SK-N-SH (cell line): ENCODE measurements at regions of chr6 and their contacts with region 1.

Region 1: DNA sequence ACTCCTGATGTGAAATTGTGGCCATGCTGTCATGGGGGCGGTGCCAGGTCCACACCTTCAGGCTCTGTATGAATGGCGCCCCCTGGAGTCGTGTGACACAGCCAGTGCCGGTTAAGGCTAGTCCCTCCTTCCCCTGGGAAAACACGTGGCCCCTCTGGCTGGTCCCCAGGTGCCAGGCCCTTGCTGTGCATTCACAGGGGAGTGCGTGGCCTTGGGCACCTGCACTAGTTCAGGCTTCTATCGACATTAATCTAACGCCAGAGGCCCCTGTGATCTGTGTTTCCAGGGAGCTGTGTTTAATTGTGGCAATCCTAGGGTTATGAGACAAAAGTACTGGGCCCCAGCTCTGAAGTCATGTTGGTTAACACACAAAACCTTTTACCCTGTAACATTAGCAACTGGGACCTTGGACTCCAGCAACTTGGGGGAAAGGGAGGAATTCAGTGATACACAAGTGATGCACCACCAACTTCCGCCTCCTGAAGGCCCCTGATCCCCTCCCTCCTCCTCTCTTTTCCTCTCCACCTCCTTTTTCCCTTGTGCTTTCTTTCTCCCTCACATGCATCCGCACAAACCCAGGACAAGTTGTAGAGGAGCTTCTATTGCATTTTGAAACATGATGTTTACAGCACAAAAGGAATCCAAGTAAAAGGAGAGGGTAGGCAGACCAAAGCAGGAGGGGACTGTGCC is 74.0 kb downstream of the SSR1 start:
- DNase-seq: peak; percentile 79
- H3K4me3 ChIP-seq: no peak overlapping the region; a peak in 1 of 4 replicates
- H3K27ac ChIP-seq: no peak overlapping the region
- H3K4me1 ChIP-seq: peaks cover 0 to 13% of the 10 kb centered on the region in 2 experiments; a peak in 2 of 4 replicates
- H3K27me3 ChIP-seq: no peaks in the 10 kb centered on the region
- CTCF ChIP-seq: peak; percentile 73
- EP300 ChIP-seq: no peak
- RAD21 ChIP-seq: peak; percentile 72

Region 2: GRCh38 chr6:6717953-6718352 is 521.1 kb before region 1 on chr6:
- CTCF ChIA-PET with region 1: interaction called, 16 read pairs
- POLR2A ChIA-PET with region 1: no interaction called
- DNase-seq: no peak
- H3K4me3 ChIP-seq: no peak overlapping the region
- H3K27ac ChIP-seq: no peak overlapping the region
- H3K4me1 ChIP-seq: no peaks in the 10 kb centered on the region; a peak in 1 of 4 replicates
- H3K27me3 ChIP-seq: no peaks in the 10 kb centered on the region
- CTCF ChIP-seq: no peak
- EP300 ChIP-seq: no peak
- RAD21 ChIP-seq: no peak

Region 3: DNA sequence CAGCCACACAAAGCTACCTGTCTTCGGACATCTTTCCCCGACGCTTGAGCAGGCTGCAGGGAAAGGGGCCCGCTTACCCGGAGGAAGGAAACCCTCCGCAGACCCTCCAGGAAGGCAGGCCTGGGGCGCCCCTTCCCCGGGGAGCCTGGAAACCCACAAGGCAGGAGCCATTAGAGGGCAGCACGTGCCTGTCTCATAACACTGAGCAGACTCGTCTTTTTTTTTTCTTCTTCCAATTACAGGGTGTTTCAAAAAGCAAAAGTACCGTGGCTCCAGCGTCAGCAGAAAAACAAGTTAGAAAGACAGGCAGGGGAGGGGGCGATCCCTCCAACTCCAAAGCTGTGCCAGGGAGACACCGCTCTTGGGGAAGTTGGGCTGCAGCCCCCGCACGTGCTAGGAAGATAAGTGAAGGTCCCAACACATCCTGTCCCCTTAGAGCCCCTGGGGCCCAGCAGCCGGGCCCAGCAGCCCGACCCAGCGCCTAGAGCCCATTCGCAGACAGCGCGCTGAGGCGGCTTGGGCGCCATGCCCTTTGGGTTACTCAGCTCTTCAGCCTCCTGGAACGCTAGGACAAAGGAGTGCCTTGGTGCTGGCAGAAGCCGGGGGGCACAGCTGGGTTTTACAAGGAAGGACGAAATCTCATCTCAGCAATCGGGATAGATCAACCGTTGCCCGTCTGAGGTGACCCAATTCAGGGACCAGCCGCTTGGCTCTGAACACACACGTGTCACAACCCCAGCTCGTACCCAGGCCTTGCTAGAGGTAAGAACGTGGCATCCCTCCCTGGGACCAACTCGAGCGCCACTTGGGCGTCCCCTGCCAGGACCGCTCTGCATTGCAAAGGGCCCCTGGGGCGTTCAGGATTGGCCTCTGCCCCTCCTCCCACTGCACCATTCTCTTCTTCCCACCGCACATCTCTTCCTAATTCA is 514.2 kb before region 1 on chr6:
- CTCF ChIA-PET with region 1: interaction called, 20 read pairs
- POLR2A ChIA-PET with region 1: no interaction called
- DNase-seq: peak; percentile 73
- H3K4me3 ChIP-seq: peak overlapping the region; percentile 17 to 33; a peak in 2 of 4 replicates
- H3K27ac ChIP-seq: no peak overlapping the region
- H3K4me1 ChIP-seq: peaks cover 2 to 4% of the 10 kb centered on the region in 2 experiments; a peak in 2 of 4 replicates
- H3K27me3 ChIP-seq: no peaks in the 10 kb centered on the region
- CTCF ChIP-seq: peak; percentile 59
- EP300 ChIP-seq: no peak
- RAD21 ChIP-seq: peak; percentile 73

Region 4: DNA sequence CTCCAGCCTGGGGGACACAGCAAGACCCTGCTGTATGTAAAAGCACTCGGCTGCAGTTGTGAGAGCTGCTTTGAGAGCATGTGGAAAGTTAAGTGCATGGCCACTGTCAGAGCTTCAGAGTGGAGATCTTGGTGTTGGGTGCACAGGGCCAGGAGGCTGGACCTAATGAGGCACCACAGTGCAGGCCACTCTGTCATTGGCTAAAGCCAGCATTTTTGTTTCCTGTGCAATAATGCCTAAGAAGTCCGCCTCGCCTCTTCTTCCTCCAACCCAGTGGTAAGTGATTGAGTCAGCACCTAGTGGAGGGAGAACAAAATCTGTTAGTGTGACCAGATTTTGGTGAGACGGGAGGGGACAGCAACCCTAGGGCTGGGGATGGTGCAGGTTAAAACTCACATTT is 13.3 kb after region 1 on chr6:
- CTCF ChIA-PET with region 1: interaction called, 18 read pairs
- POLR2A ChIA-PET with region 1: no interaction called
- DNase-seq: no peak
- H3K4me3 ChIP-seq: no peak overlapping the region
- H3K27ac ChIP-seq: no peak overlapping the region
- H3K4me1 ChIP-seq: no peaks in the 10 kb centered on the region
- H3K27me3 ChIP-seq: no peaks in the 10 kb centered on the region
- CTCF ChIP-seq: no peak
- EP300 ChIP-seq: no peak
- RAD21 ChIP-seq: no peak